Heart right ventricle (tissue), 16 donors: ENCODE measurements at regions of chr17 and their contacts with region 1.

Region 1: DNA sequence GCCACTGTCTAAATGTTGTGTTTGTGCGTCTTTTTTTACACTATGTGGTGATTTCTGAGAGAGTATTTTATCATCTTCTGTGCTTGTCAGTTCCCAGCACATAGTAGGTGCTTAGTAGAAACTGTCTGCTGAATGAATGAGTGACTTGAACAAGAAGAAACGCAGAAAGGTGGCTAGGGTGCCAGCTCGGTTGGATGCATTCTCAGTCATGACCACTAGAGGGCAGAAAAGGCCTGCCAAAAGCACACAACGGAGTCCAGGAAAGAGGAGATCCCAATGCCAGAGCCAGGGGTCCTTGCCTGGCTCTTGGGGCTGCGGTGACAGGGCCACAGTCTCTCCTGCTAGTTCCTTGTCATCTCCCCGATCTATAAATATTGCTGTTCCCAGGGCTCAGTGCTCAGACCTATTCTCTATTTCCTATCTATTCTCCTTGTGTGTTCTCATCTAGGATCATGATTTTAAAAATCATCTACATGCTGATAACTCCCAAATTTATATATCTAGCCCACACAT is 57.3 kb upstream of the CCL1 start:
- DNase-seq: peak; percentile 36 to 51
- ATAC-seq: peak in 7 of 8 donors; percentile 45 to 69 (median 57)
- H3K4me3 ChIP-seq: no peak overlapping the region
- H3K27ac ChIP-seq: no peak overlapping the region
- H3K4me1 ChIP-seq: no peaks in the 10 kb centered on the region
- H3K27me3 ChIP-seq: peaks cover 0 to 89% (median 72%) of the 10 kb centered on the region in 7 donors
- CTCF ChIP-seq: peak; percentile 88 to 97 (median 94)

Region 2: DNA sequence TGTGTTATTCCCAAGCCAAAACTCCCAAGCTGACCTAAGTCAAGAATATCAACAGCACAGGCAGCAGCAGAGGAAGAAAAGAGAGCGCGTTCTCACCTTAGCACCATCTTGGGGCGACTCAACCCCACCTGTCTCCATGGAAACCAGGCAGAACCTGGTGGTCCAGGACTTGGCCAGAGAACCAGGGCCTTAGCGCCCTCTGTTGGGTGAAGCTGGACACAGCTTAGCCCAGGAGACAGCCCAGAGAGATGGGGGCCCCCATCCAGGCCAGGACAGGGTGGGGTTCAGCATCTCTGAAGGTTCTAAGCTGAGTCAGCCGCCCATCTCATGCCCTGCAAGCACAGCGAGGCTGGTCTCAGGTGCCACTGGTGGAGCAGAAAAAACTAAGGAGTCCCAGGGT is 99.0 kb after region 1 on chr17:
- intact Hi-C with region 1: loop called in 5 of 10 experiments (anchors 2 to 10 kb)
- DNase-seq: no peak
- ATAC-seq: peak in 2 of 8 donors; percentile 50 to 58
- H3K4me3 ChIP-seq: no peak overlapping the region
- H3K27ac ChIP-seq: no peak overlapping the region
- H3K4me1 ChIP-seq: no peaks in the 10 kb centered on the region
- H3K27me3 ChIP-seq: peaks cover 0 to 60% (median 22%) of the 10 kb centered on the region in 7 donors
- CTCF ChIP-seq: peak in 7 of 9 donors; percentile 38 to 63 (median 46)

Region 3: GRCh38 chr17:34637548-34638525 is 217.5 kb after region 1 on chr17:
- intact Hi-C with region 1: loop called in 8 of 10 experiments (anchors 1 to 10 kb)
- DNase-seq: peak; percentile 73 to 75
- ATAC-seq: peak; percentile 87 to 97 (median 92)
- H3K4me3 ChIP-seq: peak overlapping the region in 9 of 10 donors; percentile 27 to 53 (median 49)
- H3K27ac ChIP-seq: no peak overlapping the region
- H3K4me1 ChIP-seq: peaks cover 0 to 11% (median 7%) of the 10 kb centered on the region in 9 donors
- H3K27me3 ChIP-seq: peaks cover 10 to 90% (median 75%) of the 10 kb centered on the region in 7 donors
- CTCF ChIP-seq: peak; percentile 67 to 89 (median 85)

Region 4: GRCh38 chr17:35529866-35530265 is 1109.6 kb after region 1 on chr17:
- intact Hi-C with region 1: loop called in 1 of 10 experiments (anchors 5 kb)
- DNase-seq: no peak
- ATAC-seq: no peak
- H3K4me3 ChIP-seq: no peak overlapping the region
- H3K27ac ChIP-seq: no peak overlapping the region
- H3K4me1 ChIP-seq: peaks cover 0 to 6% (median 0%) of the 10 kb centered on the region in 9 donors
- H3K27me3 ChIP-seq: no peaks in the 10 kb centered on the region
- CTCF ChIP-seq: no peak